ENCODE measurements at regions of chr19 and their contacts with region 1.

Region 1: DNA sequence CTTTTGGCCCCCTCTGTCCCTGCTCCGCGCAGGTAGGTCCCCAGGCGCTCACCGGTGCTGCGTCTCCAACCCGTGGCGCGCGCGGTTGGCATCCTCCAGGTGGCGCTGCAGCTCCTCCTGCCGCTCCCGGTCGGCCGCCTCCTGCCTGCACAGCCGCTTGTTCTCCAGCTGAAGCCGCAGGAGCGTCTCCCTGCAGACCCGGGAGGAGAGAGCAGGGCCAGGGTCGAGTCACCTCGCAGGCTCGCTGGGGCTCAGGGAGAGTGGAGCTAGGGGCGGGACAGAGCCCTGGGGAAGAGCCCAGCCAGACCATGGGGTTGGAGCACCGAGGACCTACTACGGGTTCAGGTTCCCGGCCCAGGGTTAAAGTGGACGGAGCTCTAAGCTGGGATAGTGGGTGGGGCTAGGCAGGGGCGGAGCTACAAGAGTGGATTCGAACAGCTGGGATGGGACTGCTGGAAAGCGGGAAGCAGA is 9.3 kb downstream of the HOOK2 start:
- DNase-seq: peak; percentile 89
- ATAC-seq: peak; percentile 73
- H3K4me3 Mint-ChIP-seq: peak overlapping the region; percentile 60
- H3K27ac Mint-ChIP-seq: peak overlapping the region; percentile 67; the same call in 1 of the 2 replicates
- H3K4me1 Mint-ChIP-seq: peaks cover 13% of the 10 kb centered on the region
- H3K27me3 Mint-ChIP-seq: no peaks in the 10 kb centered on the region; the same call in 1 of the 2 replicates
- CTCF ChIP-seq: peak; percentile 61

Region 2: DNA sequence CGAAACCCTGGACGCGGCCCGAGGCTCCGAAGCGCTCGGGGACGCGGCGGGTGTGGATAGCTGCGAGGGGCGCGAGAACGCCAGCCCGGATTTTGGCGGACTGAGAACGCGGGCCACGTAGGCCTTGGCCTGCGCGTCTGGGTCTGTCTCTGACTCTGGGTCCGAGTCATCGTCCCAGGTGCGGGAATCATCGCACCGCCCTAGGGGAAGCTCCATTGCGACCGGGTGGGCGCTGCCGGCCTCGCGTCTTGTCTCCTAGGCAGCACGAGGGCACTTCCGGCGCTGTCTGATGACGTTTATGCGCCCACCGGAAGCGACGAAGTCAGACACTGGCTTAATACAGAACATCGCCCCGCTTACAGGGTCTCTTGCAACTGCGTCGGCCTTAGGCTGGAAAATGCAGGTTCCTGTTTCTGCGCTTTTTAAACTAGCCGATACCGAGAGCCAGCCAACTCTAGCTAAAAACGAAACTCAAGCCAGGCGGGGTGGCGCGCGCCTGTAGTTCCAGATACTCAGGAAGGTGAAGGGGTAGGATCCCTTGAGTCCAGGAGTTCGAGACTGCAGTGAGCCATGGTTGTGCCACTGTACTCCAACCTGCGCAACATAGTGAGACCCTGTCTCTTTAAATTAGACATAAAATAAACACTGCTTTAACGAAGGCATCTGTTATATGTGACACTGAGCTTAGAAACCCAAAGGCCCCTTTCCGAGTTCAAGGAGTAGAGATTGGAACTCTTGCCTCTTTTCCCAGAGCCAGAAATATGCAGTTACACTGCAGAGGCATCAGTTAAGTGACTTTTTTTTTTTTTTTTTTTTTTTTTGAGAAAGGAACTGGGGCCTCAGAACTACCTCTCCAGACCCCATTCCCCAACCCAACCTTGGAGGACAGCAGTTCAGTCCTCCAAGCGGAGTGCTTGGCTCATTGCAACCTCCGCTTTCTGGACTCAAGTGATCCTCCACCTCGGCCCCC is 69.4 kb before region 1 on chr19 and contains the start of gene FBXW9:
- CTCF ChIA-PET with region 1: interaction called, 10 read pairs
- POLR2A ChIA-PET with region 1: no interaction called
- DNase-seq: peak; percentile 98
- ATAC-seq: peak; percentile 83
- H3K4me3 Mint-ChIP-seq: peak within 1 kb of the TSS; percentile 90
- H3K27ac Mint-ChIP-seq: peak within 1 kb of the TSS; percentile 99
- H3K4me1 Mint-ChIP-seq: peaks cover 3% of the 10 kb centered on the region
- H3K27me3 Mint-ChIP-seq: no peaks in the 10 kb centered on the region
- CTCF ChIP-seq: no peak
- total RNA-seq, gene FBXW9: 13.7 to 16.0 TPM (median 15.2 TPM) in 3 replicates

Region 3: DNA sequence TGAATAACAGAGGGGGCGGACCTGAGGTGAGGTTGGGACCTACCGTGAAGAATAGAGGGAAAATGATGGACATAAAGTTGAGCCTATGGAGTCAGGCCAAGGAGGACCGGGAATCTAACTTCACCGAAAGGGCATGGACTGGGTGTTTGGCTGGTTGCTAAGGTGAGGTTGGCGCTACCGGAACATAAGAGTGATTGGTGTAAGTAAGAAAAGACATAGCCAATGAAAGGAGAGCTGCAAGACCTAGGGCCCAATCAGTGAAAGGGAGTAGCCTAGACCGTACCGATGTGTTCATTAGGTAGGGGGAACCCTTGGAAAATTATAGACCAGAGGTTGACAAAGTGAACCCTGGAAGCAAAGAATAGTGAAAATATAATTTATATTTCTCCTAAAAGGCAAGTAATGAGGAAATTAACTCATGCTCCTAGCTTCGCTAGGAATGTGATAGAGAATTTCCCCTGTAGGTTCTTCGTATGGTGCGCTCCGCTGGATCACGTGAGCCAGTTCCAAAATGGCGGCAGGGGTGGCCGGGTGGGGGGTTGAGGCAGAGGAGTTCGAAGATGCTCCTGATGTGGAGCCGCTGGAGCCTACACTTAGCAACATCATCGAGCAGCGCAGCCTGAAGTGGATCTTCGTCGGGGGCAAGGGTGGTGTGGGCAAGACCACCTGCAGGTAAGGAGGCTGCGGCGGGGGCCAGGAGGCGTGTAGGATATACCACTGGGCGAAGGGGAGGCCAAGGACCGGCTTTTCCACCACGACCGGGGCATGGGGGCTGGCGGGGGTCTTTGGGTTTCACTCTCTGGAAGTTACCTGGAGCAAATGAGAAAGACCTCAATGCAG is 28.9 kb before region 1 on chr19 and contains the start of gene GET3:
- CTCF ChIA-PET with region 1: interaction called, 14 read pairs
- POLR2A ChIA-PET with region 1: no interaction called
- DNase-seq: peak; percentile 89
- ATAC-seq: peak; percentile 93
- H3K4me3 Mint-ChIP-seq: peak within 1 kb of the TSS; percentile 100
- H3K27ac Mint-ChIP-seq: peak within 1 kb of the TSS; percentile 99
- H3K4me1 Mint-ChIP-seq: peaks cover 25% of the 10 kb centered on the region
- H3K27me3 Mint-ChIP-seq: no peaks in the 10 kb centered on the region; the same call in 1 of the 2 replicates
- CTCF ChIP-seq: no peak
- total RNA-seq, gene GET3: 104 to 110 TPM (median 104 TPM) in 3 replicates

Region 4: DNA sequence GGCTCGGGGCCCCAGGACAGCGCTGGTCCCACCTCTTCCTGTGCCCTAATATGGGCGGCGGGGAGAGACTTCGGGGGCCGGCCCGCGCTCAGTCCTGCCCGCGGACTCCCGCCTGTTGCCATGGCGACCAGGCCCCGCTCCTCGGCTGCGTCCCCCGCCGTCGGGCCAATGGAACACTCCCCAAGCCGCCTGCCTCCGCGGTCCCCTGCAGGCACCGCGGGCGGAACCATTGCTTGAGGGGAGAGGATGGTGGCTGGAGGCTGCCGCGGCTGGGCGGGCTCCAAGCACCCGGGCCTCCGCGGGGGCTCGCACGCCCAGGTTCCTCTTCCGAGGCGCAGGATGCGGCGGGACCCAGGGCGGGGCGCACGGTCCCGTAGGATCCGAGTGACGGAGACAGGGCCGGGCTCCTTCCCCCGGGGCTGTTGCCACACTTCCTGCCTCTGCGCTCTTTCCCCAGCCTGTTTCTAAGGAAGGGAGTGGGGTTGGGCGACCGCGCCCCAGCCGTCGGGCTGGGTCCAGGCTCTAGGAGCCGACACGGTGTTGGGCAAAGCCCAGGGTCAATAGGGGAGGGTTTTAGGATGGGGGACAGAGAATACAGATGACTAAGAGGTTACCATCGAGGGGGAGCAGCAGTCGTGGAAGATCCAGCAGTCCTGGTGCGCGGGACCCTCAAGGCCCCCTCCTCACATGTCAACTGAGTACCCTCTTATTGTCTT is 24.0 kb after region 1 on chr19:
- CTCF ChIA-PET with region 1: interaction called, 341 read pairs
- POLR2A ChIA-PET with region 1: interaction called, 10 read pairs
- DNase-seq: peak; percentile 98
- ATAC-seq: peak; percentile 63
- H3K4me3 Mint-ChIP-seq: peak overlapping the region; percentile 84
- H3K27ac Mint-ChIP-seq: peak overlapping the region; percentile 79; the same call in 1 of the 2 replicates
- H3K4me1 Mint-ChIP-seq: peaks cover 29% of the 10 kb centered on the region
- H3K27me3 Mint-ChIP-seq: peaks cover 32% of the 10 kb centered on the region
- CTCF ChIP-seq: no peak

Region 5: DNA sequence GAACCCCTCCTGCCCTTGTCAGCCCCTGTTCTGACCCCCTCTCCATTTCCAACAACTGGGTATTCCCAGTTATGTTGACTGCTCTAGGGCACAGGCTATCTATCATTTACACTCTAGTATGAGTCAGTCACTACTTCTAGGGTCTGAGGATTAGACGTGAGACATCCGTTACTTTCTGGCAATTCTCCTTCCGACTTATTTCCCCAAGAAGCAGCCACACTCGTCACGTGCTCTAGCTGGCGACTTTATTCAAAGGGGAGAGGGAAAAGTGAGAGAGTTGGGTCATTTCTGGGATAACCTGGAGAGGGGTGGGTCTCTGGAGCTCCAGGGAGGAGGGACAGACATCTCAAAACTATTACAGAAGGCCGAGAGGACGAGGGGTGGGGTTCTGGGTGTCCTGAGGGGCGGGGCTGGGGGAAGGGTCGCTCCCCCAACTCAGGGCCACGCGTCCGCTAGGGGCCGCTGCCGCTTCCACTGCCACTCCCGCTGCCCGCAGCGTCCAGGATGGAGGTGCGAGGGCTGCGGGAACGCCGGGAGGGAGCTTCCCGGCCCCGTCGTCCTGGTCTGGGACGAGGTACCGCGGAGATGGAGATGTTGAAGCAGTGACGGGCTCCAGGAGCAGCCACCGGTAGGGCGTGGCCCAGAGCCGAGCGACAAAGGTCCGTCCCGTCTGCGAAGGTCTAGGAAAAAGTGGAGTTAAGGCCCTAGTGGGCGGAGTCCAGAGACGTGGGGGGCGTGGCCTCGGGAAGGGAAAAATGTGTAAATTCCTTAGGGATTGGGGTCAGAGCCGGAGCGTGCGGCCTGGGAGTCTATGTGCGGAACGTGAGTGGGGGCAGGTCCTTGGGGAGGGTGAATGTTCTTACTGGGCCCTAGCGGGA is 59.4 kb after region 1 on chr19:
- CTCF ChIA-PET with region 1: interaction called, 11 read pairs
- POLR2A ChIA-PET with region 1: no interaction called
- DNase-seq: peak; percentile 94
- ATAC-seq: peak; percentile 85
- H3K4me3 Mint-ChIP-seq: peak overlapping the region; percentile 77
- H3K27ac Mint-ChIP-seq: peak overlapping the region; percentile 89
- H3K4me1 Mint-ChIP-seq: peaks cover 21% of the 10 kb centered on the region
- H3K27me3 Mint-ChIP-seq: peaks cover 31% of the 10 kb centered on the region
- CTCF ChIP-seq: peak; percentile 60

Region 6: DNA sequence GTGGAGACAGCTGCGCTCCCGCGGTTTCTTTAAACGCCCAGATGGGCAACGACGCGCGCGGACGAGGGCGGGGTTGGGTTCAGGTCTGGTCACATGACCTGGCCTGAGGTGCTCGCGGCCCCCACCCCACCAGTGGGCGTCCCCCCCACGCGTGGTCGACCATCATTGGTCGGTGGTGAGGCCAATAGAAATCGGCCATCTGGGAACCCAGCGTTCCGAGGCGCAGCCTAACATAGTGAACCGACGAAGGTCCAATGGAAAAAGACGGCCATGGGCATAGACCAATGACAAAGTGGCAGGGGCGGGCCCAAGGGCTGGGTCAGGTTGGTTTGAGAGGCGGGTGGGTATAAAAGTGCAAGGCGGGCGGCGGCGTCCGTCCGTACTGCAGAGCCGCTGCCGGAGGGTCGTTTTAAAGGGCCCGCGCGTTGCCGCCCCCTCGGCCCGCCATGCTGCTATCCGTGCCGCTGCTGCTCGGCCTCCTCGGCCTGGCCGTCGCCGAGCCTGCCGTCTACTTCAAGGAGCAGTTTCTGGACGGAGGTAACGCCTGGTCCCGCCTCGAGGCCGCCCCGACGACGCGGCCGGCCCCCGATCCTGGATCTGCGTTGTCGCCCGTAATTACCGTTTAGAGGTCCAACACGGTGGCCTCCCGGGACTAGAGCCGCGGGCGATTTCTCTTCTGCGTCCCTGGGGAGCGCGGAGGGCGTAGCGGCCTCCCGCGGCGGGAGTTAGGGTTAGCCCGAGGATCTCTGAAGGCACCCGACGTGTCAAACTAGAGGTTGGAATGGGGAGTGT is 172.3 kb after region 1 on chr19 and contains the start of gene CALR:
- CTCF ChIA-PET with region 1: no interaction called
- POLR2A ChIA-PET with region 1: no interaction called
- DNase-seq: peak; percentile 99
- ATAC-seq: peak; percentile 90
- H3K4me3 Mint-ChIP-seq: peak within 1 kb of the TSS; percentile 99
- H3K27ac Mint-ChIP-seq: peak within 1 kb of the TSS; percentile 91
- H3K4me1 Mint-ChIP-seq: peaks cover 35% of the 10 kb centered on the region
- H3K27me3 Mint-ChIP-seq: no peaks in the 10 kb centered on the region
- CTCF ChIP-seq: no peak
- total RNA-seq, gene CALR: 977 to 1,088 TPM (median 978 TPM) in 3 replicates

Measured in WTC11 (cell line).